ENCODE measurements at regions of chr16 and their contacts with region 1.

Region 1: DNA sequence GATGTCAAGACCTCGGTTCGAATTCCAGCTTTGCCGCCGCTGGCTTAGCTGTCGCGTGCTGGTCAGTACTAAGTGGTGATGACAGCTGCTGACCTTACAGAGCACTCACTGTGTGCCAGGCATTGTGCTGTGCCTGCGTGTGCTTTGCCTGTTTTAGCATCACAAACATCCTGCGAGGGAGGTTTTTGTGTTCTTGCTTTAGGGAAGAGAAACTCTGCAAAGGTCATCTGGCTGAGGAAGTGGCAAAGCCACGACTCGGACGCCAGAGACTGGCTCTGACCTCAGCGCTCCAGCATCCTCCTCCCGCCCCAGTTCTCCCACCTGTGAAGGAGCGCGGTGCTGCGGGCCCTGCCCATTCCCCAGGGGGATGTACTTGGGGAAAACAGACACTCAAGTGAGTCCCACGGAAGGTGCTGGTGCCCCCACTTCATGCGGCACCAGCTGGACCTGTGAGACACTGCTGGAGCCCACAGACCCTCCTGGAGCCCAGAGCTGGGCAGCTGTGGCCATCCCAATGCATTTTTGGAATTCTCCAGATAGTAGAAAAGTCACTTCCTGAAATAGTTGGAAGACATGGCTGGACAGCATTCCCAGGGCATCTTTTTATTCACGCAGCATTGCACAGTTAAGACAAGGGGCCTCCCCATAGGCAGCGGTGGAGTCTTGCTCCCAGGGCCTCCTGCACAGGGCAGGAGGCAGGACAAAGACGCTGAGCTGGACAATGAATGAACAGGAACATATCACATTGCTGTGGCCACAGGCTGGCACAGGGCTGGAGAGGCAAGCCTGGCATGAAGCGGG is 20.0 kb upstream of the HERPUD1 start:
- H3K4me3 Mint-ChIP-seq: peak overlapping the region; percentile 15
- H3K27ac Mint-ChIP-seq: peak overlapping the region; percentile 84
- H3K4me1 Mint-ChIP-seq: peaks cover 59% of the 10 kb centered on the region
- H3K27me3 Mint-ChIP-seq: peaks cover 23% of the 10 kb centered on the region

Region 2: GRCh38 chr16:56824331-56824730 is 87.6 kb before region 1 on chr16:
- intact Hi-C with region 1: no loop called
- H3K4me3 Mint-ChIP-seq: no peak overlapping the region
- H3K27ac Mint-ChIP-seq: no peak overlapping the region
- H3K4me1 Mint-ChIP-seq: peaks cover 5% of the 10 kb centered on the region
- H3K27me3 Mint-ChIP-seq: no peaks in the 10 kb centered on the region

Region 3: GRCh38 chr16:56866943-56867830 is 44.8 kb before region 1 on chr16:
- intact Hi-C with region 1: loop called (anchors 5 kb)
- H3K4me3 Mint-ChIP-seq: no peak overlapping the region
- H3K27ac Mint-ChIP-seq: no peak overlapping the region
- H3K4me1 Mint-ChIP-seq: peaks cover 65% of the 10 kb centered on the region
- H3K27me3 Mint-ChIP-seq: peaks cover 27% of the 10 kb centered on the region

Region 4: DNA sequence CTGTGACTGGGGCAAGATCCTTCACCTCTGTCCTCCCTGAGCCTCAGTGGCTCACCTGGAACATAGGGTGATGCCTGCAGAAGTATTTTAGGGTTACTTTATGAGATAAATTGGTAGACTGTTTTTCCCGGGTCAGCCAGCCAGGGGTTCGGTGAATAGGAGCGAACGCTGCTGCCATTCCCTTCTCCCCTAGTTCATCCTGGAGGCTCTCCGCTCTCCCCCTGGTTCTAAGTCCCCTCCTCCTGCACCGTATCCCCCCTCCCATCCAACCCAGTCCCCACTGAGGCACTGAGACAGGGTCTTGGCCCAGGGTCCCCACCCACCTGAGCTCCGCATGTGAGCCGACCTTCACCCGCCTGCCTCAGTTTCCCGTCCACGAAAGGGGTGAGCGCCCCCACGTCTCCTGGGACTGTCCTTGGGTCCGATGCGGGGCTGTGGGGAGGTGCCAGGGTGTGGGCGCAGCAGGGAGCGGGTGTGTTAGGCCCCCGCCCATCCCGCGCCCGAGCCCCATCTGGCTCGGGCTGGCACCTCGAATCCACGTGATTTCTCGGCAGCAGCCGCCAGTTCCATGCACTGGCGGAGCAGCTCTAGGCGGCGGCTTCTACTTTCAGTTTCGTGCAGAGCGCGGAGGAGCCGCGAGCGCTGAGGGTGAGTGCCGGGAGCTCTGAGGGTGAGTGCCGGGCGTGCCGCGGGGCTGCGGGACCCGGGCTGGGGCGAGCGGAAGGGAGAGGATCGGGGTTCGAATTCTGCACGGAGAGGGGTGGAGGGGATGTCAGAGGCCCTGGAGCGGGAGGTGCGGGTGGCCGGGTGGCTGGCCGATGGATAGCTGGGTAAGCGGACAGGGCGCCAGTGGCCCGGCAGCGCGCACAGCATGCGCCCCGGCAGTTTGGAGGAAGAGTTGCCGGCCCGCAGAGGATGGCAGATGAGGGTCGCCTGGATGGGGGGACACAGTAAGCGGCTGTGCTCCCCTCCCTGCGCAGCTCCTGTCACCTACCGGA is 77.3 kb after region 1 on chr16 and contains the start of gene NLRC5:
- intact Hi-C with region 1: no loop called
- H3K4me3 Mint-ChIP-seq: peak within 1 kb of the TSS; percentile 99
- H3K27ac Mint-ChIP-seq: peak within 1 kb of the TSS; percentile 97
- H3K4me1 Mint-ChIP-seq: peaks cover 70% of the 10 kb centered on the region
- H3K27me3 Mint-ChIP-seq: no peaks in the 10 kb centered on the region

Measured in dendritic cell treated with granulocyte-macrophage colony-stimulating factor and Interleukin-4, amounts not matched to agents 40 ng/mL and 50 ng/mL, for 4 days (primary cell).